GM10248 (cell line): ENCODE measurements at regions of chr11 and their contacts with region 1.

Region 1: GRCh38 chr11:406978-407739 is 7.6 kb downstream of the SIGIRR start:
- DNase-seq: peak; percentile 95
- CTCF ChIP-seq: no peak

Region 2: GRCh38 chr11:288328-289144 is 118.6 kb before region 1 on chr11 and contains the start of gene PGGHG:
- CTCF ChIA-PET with region 1: no interaction called
- POLR2A ChIA-PET with region 1: no interaction called
- DNase-seq: peak; percentile 90
- CTCF ChIP-seq: no peak

Region 3: GRCh38 chr11:379205-380094 is 27.7 kb before region 1 on chr11:
- CTCF ChIA-PET with region 1: no interaction called
- POLR2A ChIA-PET with region 1: no interaction called
- DNase-seq: no peak
- CTCF ChIP-seq: no peak

Region 4: GRCh38 chr11:396948-397548 is 10.1 kb before region 1 on chr11:
- CTCF ChIA-PET with region 1: interaction called, 22 read pairs
- POLR2A ChIA-PET with region 1: no interaction called
- DNase-seq: peak; percentile 91
- CTCF ChIP-seq: peak; percentile 70